ENCODE measurements at regions of chr22 and their contacts with region 1.

Region 1: DNA sequence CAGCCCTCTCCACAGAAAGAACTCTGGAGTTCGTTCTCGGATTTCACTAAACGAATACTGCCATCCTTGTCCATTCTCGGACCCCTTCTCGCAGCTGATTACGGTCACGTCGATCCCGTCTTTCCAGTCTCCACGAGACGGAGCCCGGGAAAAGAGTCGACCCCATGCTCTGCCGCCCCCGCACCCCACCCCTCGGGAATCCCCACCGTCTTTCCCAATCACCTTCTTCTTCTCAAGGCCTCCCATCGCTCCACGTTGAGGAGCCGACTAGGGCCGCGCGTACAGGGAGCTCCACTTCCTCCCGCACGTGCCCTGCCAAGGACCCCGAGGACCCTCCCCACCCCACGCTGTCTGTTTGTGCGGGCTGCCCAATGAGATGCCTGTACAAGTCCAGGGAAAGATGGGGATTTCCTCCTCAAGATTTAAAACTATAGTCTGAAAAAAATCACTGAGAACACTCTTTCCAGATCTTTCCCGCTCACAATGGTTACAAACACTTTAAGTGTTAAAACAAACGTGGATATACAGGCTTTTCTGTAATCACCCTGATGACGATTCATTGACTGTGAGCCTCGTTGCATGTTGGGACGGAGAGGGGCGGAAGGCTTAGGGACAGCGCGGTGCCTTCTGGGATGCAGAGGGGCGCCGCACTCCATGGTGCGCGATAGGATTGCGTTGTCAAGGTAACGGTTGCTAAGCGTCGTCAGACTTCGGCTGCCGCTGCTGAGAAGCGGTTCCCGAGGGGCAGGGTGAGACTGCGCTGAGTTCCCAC is at the start of gene PES1:
- DNase-seq: peak; percentile 90 to 99 (median 95)
- ATAC-seq: peak; percentile 96
- H3K4me3 ChIP-seq: peak within 1 kb of the TSS; percentile 79 to 80
- H3K4me3 Mint-ChIP-seq: no peak within 1 kb of the TSS
- H3K27ac ChIP-seq: peak within 1 kb of the TSS; percentile 89 to 97
- H3K27ac Mint-ChIP-seq: no peak within 1 kb of the TSS
- H3K4me1 ChIP-seq: peaks cover 15% of the 10 kb centered on the region
- H3K4me1 Mint-ChIP-seq: no peaks in the 10 kb centered on the region
- H3K27me3 ChIP-seq: no peaks in the 10 kb centered on the region
- H3K27me3 Mint-ChIP-seq: peaks cover 13% of the 10 kb centered on the region
- CTCF ChIP-seq: no peak
- total RNA-seq, gene PES1: 39.7 to 47.0 TPM

Region 2: GRCh38 chr22:30326706-30327362 is 264.9 kb before region 1 on chr22 and contains the start of gene TBC1D10A:
- CTCF ChIA-PET with region 1: no interaction called
- POLR2A ChIA-PET with region 1: no interaction called
- intact Hi-C with region 1: loop called in 1 of 2 experiments (anchors 5 kb)
- DNase-seq: peak; percentile 86 to 97 (median 94)
- ATAC-seq: peak; percentile 92
- H3K4me3 ChIP-seq: peak within 1 kb of the TSS; percentile 52 to 72
- H3K4me3 Mint-ChIP-seq: peak within 1 kb of the TSS; percentile 93
- H3K27ac ChIP-seq: peak within 1 kb of the TSS; percentile 68 to 86
- H3K27ac Mint-ChIP-seq: peak within 1 kb of the TSS; percentile 91
- H3K4me1 ChIP-seq: peaks cover 47% of the 10 kb centered on the region
- H3K4me1 Mint-ChIP-seq: peaks cover 45% of the 10 kb centered on the region
- H3K27me3 ChIP-seq: no peaks in the 10 kb centered on the region
- H3K27me3 Mint-ChIP-seq: no peaks in the 10 kb centered on the region
- CTCF ChIP-seq: no peak
- total RNA-seq, gene TBC1D10A: 77.5 to 87.3 TPM

Region 3: DNA sequence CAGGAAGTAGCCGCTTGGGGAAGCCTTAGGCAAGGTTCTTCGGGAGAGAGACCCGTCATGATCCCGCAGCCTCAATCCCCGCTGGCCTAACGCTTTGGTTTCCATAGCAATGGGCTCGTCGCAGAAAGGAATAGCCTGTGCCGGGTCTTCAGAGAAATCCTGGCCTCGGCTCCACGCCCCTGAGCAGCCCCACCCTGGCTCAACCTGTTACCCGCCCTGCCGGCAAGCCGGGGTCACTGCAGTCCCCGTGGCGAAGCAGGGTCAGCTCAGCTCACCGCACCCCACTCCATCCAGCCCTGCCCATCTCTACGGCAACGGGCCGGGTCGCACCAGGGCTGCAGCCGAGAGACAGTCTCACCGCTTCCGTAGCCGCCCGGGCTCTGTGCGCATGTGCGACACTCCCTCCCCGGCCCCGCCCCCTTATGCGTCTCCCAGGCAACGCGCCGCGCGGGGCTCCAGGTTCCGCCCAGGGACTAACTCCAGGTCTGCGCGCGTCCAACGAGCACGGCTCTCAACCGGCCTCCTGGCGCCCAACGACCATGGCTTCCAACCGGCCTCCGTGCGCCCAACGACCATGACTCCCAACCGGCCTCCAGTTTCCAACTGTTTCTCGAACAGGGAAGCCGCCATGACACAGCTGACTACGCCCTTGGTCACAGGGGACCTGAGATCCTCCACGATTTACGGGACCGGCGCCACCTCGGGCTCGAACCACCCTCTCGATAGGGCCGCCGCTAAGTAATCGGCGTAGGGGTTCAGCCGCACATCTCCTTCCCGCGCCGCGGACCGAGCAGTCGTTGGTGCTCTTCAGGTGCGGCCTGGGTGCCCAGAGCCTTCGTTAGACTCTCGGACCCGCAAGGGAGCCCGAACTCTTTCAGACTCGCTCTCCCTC is 76.0 kb after region 1 on chr22 and contains the start of gene DUSP18:
- CTCF ChIA-PET with region 1: no interaction called
- POLR2A ChIA-PET with region 1: no interaction called
- intact Hi-C with region 1: loop called (anchors 1 kb)
- DNase-seq: peak; percentile 88 to 98 (median 95)
- ATAC-seq: peak; percentile 90
- H3K4me3 ChIP-seq: peak within 1 kb of the TSS; percentile 73 to 87
- H3K4me3 Mint-ChIP-seq: peak within 1 kb of the TSS; percentile 96
- H3K27ac ChIP-seq: peak within 1 kb of the TSS; percentile 54 to 72
- H3K27ac Mint-ChIP-seq: peak within 1 kb of the TSS; percentile 94
- H3K4me1 ChIP-seq: peaks cover 11% of the 10 kb centered on the region
- H3K4me1 Mint-ChIP-seq: peaks cover 18% of the 10 kb centered on the region
- H3K27me3 ChIP-seq: no peaks in the 10 kb centered on the region
- H3K27me3 Mint-ChIP-seq: no peaks in the 10 kb centered on the region
- CTCF ChIP-seq: no peak
- total RNA-seq, gene DUSP18: 3.4 to 4.5 TPM

Region 4: DNA sequence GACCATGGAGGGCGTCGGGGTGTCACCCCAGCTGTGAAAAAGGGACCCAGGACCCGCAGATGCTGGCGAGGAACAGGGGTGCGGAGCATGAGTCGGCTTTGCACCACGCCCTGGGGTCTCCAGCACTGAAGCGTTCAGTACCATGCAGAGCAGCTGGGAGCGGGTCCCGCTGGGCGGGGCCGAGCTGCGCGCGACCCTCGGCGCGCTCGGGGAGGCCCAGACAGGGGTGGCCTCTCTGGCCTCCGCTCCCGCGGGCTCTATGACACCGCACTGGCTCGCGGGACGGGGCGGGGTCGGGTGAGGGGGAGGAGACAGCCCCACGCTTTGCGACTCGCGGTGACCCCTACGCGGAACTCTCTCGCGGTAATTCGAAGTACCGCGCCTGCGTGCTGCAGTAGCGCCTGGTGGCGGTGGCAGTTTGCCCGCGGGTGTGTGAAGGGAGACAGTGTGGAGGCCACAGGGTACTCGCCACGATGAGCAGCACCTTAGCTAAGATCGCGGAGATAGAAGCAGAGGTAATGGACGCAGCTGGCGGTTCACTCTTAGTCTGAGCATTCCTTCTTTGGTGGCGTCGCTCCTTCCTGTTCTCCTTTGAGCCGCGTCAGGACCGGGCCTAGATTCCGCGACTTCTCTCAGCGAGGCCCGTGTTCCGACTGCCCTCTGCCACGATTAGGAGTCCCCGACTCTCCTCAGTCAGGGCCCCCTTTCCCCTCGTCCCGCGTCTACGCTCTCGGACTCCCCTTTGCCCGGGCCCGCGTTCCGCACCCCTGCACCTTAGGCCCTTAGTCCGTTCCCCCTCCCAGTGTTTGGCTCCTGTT is 807.6 kb after region 1 on chr22 and contains the start of gene DRG1:
- CTCF ChIA-PET with region 1: no interaction called
- POLR2A ChIA-PET with region 1: no interaction called
- intact Hi-C with region 1: loop called in 1 of 2 experiments (anchors 5 kb)
- DNase-seq: peak; percentile 91 to 98 (median 97)
- ATAC-seq: peak; percentile 96
- H3K4me3 ChIP-seq: peak within 1 kb of the TSS; percentile 76 to 99
- H3K4me3 Mint-ChIP-seq: peak within 1 kb of the TSS; percentile 95
- H3K27ac ChIP-seq: peak within 1 kb of the TSS; percentile 82 to 87
- H3K27ac Mint-ChIP-seq: peak within 1 kb of the TSS; percentile 96
- H3K4me1 ChIP-seq: peaks cover 13% of the 10 kb centered on the region
- H3K4me1 Mint-ChIP-seq: peaks cover 31% of the 10 kb centered on the region
- H3K27me3 ChIP-seq: no peaks in the 10 kb centered on the region
- H3K27me3 Mint-ChIP-seq: no peaks in the 10 kb centered on the region
- CTCF ChIP-seq: no peak
- total RNA-seq, gene DRG1: 55.9 to 63.3 TPM